Activated CD4-positive, alpha-beta T cell treated with anti-CD3 and anti-CD28 coated beads for 36 hours (primary cell): ENCODE measurements at regions of chr19 and their contacts with region 1.

Region 1: GRCh38 chr19:55258828-55259539 is at the start of gene PPP6R1:
- DNase-seq: peak; percentile 98
- ATAC-seq: peak; percentile 69
- H3K4me3 Mint-ChIP-seq: peak within 1 kb of the TSS; percentile 95
- H3K27ac Mint-ChIP-seq: peak within 1 kb of the TSS; percentile 98
- H3K4me1 Mint-ChIP-seq: peaks cover 22% of the 10 kb centered on the region
- H3K27me3 Mint-ChIP-seq: no peaks in the 10 kb centered on the region
- total RNA-seq, gene PPP6R1: 177 to 201 TPM

Region 2: DNA sequence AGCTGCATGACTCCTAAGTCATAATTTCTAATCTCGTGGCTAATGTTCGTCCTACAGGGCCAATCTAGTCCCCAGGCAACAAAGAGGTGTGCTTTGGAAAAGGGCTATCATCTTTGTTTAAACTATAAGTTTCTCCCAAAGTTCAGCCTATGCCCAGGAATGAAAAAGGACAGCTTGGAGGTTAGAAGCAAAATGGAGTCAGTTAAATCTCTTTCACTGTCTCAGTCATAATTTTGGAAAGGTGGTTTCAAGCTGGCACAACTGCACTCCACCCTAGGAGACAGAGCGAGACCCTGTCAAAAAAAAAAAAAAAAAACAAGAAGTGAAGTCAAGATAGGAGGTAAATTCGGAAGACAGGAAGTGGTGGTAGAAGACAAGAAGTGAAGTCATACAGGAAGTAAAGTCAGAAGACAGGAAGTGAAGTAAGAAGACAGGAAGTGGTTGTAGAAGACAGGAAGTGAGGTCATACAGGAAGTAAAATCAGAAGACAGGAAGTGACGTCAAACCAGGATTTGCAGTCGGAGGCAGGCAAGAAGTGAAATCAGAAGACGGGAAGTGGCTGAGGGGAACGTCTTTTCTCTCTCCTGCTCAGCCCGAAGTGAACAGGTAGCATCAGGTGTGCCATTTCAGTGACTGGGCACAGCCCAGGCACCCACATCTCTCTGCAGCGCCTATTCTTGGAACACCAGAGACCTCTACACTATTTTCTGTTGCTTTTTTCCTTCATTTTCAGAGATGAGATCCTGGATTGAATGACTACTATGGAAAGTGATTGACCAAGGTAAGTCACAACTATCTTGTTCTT is 253.1 kb before region 1 on chr19:
- CTCF ChIA-PET with region 1: no interaction called
- POLR2A ChIA-PET with region 1: no interaction called
- intact Hi-C with region 1: loop called in 1 of 2 experiments (anchors 1 kb)
- DNase-seq: peak; percentile 65
- ATAC-seq: peak; percentile 86
- H3K4me3 Mint-ChIP-seq: peak overlapping the region; percentile 82
- H3K27ac Mint-ChIP-seq: peak overlapping the region; percentile 94
- H3K4me1 Mint-ChIP-seq: peaks cover 25% of the 10 kb centered on the region
- H3K27me3 Mint-ChIP-seq: peaks cover 13% of the 10 kb centered on the region

Region 3: GRCh38 chr19:55166530-55167268 is 92.3 kb before region 1 on chr19 and contains the start of gene DNAAF3:
- CTCF ChIA-PET with region 1: no interaction called
- POLR2A ChIA-PET with region 1: no interaction called
- intact Hi-C with region 1: loop called in 1 of 2 experiments (anchors 1 kb)
- DNase-seq: peak; percentile 95
- ATAC-seq: peak; percentile 95
- H3K4me3 Mint-ChIP-seq: peak within 1 kb of the TSS; percentile 71
- H3K27ac Mint-ChIP-seq: peak within 1 kb of the TSS; percentile 11
- H3K4me1 Mint-ChIP-seq: peaks cover 10% of the 10 kb centered on the region
- H3K27me3 Mint-ChIP-seq: peaks cover 45% of the 10 kb centered on the region
- total RNA-seq, gene DNAAF3: 0.53 to 0.72 TPM

Region 4: GRCh38 chr19:55301459-55302317 is 42.7 kb after region 1 on chr19:
- CTCF ChIA-PET with region 1: interaction called, 4 read pairs
- POLR2A ChIA-PET with region 1: no interaction called
- intact Hi-C with region 1: loop called in 1 of 2 experiments (anchors 1 kb)
- DNase-seq: peak; percentile 97
- ATAC-seq: peak; percentile 90
- H3K4me3 Mint-ChIP-seq: peak overlapping the region; percentile 81
- H3K27ac Mint-ChIP-seq: peak overlapping the region; percentile 90
- H3K4me1 Mint-ChIP-seq: peaks cover 6% of the 10 kb centered on the region
- H3K27me3 Mint-ChIP-seq: no peaks in the 10 kb centered on the region

Region 5: GRCh38 chr19:55461259-55461973 is 202.4 kb after region 1 on chr19 and contains the start of gene ISOC2:
- CTCF ChIA-PET with region 1: no interaction called
- POLR2A ChIA-PET with region 1: no interaction called
- intact Hi-C with region 1: loop called in 1 of 2 experiments (anchors 1 kb)
- DNase-seq: peak; percentile 100
- ATAC-seq: peak; percentile 98
- H3K4me3 Mint-ChIP-seq: peak within 1 kb of the TSS; percentile 80
- H3K27ac Mint-ChIP-seq: peak within 1 kb of the TSS; percentile 82
- H3K4me1 Mint-ChIP-seq: peaks cover 14% of the 10 kb centered on the region
- H3K27me3 Mint-ChIP-seq: no peaks in the 10 kb centered on the region
- total RNA-seq, gene ISOC2: 24.3 to 28.0 TPM

Region 6: GRCh38 chr19:56121180-56122167 is 862.5 kb after region 1 on chr19 and contains the start of gene ZNF787:
- CTCF ChIA-PET with region 1: no interaction called
- POLR2A ChIA-PET with region 1: no interaction called
- intact Hi-C with region 1: loop called in 1 of 2 experiments (anchors 5 kb)
- DNase-seq: peak; percentile 98
- ATAC-seq: peak; percentile 92
- H3K4me3 Mint-ChIP-seq: peak within 1 kb of the TSS; percentile 82
- H3K27ac Mint-ChIP-seq: peak within 1 kb of the TSS; percentile 91
- H3K4me1 Mint-ChIP-seq: peaks cover 48% of the 10 kb centered on the region
- H3K27me3 Mint-ChIP-seq: no peaks in the 10 kb centered on the region
- total RNA-seq, gene ZNF787: 27.6 to 28.4 TPM